Heart right ventricle (tissue), 16 donors: ENCODE measurements at regions of chr13 and their contacts with region 1.

Region 1: DNA sequence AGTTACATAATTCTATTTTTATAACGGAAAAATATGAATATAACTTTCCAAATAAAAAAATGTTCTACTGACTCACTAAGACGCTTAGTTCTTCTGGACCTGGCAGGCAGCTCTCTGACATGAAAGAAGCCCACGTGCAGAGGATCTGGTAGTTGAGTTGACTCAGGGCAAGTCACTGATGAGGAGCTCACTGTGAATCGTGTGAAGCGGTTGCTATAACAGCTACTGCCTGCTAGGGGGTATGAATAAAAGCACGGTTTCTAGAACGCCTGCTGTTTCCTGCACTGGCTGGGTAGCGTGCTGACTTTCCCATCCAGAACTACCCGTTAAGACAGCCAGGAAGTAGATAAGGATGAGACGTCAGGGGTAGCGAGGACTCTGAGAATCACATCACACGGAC is 54.7 kb upstream of the WASF3 start:
- DNase-seq: no peak
- ATAC-seq: peak; percentile 16 to 80 (median 45)
- H3K4me3 ChIP-seq: no peak overlapping the region
- H3K27ac ChIP-seq: no peak overlapping the region
- H3K4me1 ChIP-seq: peaks cover 0 to 7% (median 0%) of the 10 kb centered on the region in 9 donors
- H3K27me3 ChIP-seq: peaks cover 0 to 8% (median 3%) of the 10 kb centered on the region in 7 donors
- CTCF ChIP-seq: peak in 1 of 9 donors; percentile 20

Region 2: DNA sequence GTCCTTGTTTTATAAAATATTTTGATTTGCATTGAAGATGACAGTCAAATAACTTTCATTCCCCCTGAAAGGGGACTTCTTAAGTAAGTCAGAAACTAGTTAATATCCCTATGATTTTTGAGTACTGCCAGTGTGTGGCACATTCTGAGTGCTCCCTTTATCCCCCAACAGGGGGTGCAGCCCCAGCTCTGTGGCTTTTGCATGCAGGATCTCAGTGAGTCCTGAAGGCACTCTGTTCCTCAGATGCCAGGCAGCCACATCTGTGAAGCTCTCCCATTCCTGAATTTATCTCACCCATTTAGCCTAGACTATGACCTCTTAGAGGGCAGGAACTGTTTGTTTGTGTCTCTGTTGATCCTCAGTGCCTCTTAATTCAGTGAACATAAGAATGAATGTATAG is 125.8 kb before region 1 on chr13:
- intact Hi-C with region 1: loop called in 1 of 10 experiments (anchors 10 kb)
- DNase-seq: no peak
- ATAC-seq: no peak
- H3K4me3 ChIP-seq: no peak overlapping the region
- H3K27ac ChIP-seq: no peak overlapping the region
- H3K4me1 ChIP-seq: peaks cover 0 to 11% (median 0%) of the 10 kb centered on the region in 9 donors
- H3K27me3 ChIP-seq: no peaks in the 10 kb centered on the region
- CTCF ChIP-seq: peak in 8 of 9 donors; percentile 9 to 43 (median 32)